GM13976 (cell line): ENCODE measurements at regions of chr14 and their contacts with region 1.

Region 1: DNA sequence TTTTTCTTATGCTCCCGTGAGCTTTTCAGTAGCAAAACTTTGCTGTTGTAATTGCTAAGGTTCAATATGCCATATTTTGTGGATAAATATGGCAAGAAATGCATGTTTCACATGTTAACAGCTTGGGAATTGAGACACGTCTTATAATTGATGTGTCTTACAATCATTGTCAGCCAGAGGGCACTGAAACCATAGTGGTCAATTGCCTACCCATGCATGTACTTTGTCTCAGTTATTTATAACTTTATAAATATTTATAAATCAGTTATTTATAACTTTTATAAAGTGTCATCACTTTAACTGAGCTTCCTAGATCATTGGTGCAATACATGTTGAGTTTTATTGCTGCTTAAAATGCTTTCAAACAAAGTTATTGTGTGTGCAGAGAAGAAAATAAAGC is 82.0 kb downstream of the CATSPERB start:
- DNase-seq: peak; percentile 66
- CTCF ChIP-seq: peak; percentile 46

Region 2: DNA sequence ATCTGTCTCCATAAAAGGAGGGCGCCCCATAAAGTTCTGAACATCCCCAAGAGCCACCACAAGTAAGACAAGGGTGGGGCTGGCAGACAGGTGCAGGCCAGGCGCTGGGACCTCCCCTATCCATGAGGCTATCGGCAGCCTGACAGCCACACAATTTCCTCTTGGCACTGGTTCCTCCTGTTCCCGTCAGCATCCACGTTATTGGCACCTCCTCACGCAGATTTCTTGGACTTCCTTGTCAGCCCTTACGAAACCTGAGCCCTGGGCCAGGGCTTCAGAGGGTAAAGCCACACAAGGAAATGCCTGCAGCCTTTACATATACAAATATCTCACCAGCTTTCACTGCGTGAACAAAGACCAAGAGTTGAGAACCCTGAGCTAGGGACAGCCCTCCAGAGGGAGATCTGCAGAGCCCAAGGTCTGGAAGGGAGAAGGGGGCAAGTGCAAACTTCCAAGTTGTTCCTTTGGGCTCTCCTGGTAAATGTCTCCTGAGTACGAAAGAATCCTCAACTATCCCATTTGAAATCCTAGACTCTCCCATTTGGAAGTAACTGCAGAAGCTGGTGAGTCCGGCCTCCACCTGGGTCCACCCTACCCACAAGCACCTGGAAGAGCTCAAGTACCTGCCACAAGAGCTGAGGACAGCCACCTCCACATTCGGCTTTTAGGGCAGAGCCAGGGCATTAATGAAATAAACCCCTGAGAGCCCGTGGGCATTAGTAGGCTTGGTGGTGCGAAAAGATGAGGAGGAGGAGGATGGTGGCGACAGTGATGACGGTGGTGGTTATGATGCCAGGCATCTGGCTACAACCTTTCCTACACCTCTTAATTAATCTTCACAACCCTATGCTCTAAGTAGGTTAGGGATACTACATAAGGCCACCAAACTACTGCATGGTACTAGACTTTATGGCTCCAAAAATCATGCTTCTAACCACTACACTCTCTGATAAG is 222.9 kb after region 1 on chr14:
- in situ Hi-C with region 1: loop called (anchors 25 kb)
- DNase-seq: no peak
- CTCF ChIP-seq: no peak